ENCODE measurements at regions of chr20 and their contacts with region 1.

Region 1: GRCh38 chr20:40689943-40690835 is 1.2 kb upstream of the MAFB start:
- DNase-seq: no peak
- ATAC-seq: peak; percentile 93
- H3K4me3 ChIP-seq: peak overlapping the region; percentile 55; the same call in 1 of the 2 replicates
- H3K27ac ChIP-seq: no peak overlapping the region
- H3K4me1 ChIP-seq: no peaks in the 10 kb centered on the region
- H3K27me3 ChIP-seq: peaks cover 21 to 32% of the 10 kb centered on the region in 2 experiments
- CTCF ChIP-seq: peak; percentile 79 to 89 (median 85)
- EP300 ChIP-seq: no peak
- POLR2A ChIP-seq: no peak
- RAD21 ChIP-seq: peak; percentile 74

Region 2: DNA sequence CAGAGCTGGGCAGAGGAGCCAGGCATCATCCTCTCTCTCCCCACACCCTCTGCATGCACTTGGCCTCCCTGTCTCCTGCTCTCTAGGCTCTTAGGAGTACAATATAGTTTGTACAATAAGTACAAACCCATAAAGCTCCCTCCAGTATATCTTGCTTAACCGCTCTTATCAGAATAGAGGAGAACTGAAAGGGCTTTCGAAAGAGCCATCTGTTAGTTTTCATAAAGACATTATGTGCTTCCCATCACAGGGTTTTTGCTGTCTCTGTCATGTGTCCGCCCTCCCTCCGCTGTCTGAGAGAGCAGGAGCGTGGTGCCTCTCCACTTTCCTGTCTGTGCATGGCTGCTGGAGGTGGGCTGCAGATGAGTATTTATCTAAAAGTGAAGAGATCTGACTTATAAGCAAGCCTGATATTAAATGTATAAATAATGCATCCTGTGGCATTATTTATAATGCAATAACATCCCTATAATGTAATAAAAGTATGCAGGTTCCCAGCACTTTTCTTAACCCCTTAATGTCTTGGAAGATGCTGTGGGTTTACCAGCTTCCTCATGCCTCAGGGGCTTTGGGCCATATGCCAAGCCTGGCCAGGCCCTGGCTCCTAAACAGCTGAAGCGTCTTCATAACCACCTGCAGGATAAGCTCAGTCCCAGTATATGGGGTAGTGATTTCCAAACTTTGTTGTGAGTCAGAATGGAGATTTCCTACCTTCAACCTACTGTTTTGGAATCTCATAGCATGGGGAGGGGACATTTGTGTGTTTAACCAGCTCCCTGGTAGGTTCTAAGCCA is 1431.0 kb before region 1 on chr20:
- CTCF ChIA-PET with region 1: no interaction called
- POLR2A ChIA-PET with region 1: no interaction called
- RAD21 ChIA-PET with region 1: no interaction called
- SMC1A ChIA-PET with region 1: no interaction called
- in situ Hi-C with region 1: no loop called
- intact Hi-C with region 1: no loop called
- DNase-seq: no peak
- ATAC-seq: no peak
- H3K4me3 ChIP-seq: no peak overlapping the region
- H3K27ac ChIP-seq: no peak overlapping the region
- H3K4me1 ChIP-seq: no peaks in the 10 kb centered on the region
- H3K27me3 ChIP-seq: no peaks in the 10 kb centered on the region
- CTCF ChIP-seq: no peak
- EP300 ChIP-seq: no peak
- POLR2A ChIP-seq: no peak
- RAD21 ChIP-seq: no peak

Region 3: GRCh38 chr20:39289316-39289715 is 1400.9 kb before region 1 on chr20:
- CTCF ChIA-PET with region 1: no interaction called
- POLR2A ChIA-PET with region 1: no interaction called
- RAD21 ChIA-PET with region 1: no interaction called
- SMC1A ChIA-PET with region 1: no interaction called
- in situ Hi-C with region 1: loop called (anchors 10 kb)
- intact Hi-C with region 1: no loop called
- DNase-seq: no peak
- ATAC-seq: peak; percentile 73
- H3K4me3 ChIP-seq: no peak overlapping the region
- H3K27ac ChIP-seq: no peak overlapping the region
- H3K4me1 ChIP-seq: no peaks in the 10 kb centered on the region
- H3K27me3 ChIP-seq: no peaks in the 10 kb centered on the region
- CTCF ChIP-seq: peak; percentile 43 to 70 (median 43); a peak in 4 of 6 replicates
- EP300 ChIP-seq: no peak
- POLR2A ChIP-seq: no peak
- RAD21 ChIP-seq: peak; percentile 54